Naive thymus-derived CD4-positive, alpha-beta T cell (primary cell): ENCODE measurements at regions of chr3 and their contacts with region 1.

Region 1: GRCh38 chr3:136075218-136075808 is 109.8 kb downstream of the PPP2R3A start:
- DNase-seq: peak; percentile 38 to 73 (median 65)
- ATAC-seq: peak; percentile 88
- H3K4me3 ChIP-seq: no peak overlapping the region
- H3K4me3 Mint-ChIP-seq: no peak overlapping the region
- H3K27ac ChIP-seq: no peak overlapping the region
- H3K27ac Mint-ChIP-seq: peak overlapping the region in 1 of 9 donors; percentile 28
- H3K4me1 ChIP-seq: no peaks in the 10 kb centered on the region
- H3K4me1 Mint-ChIP-seq: peaks cover 0 to 5% (median 4%) of the 10 kb centered on the region in 7 donors
- H3K27me3 ChIP-seq: no peaks in the 10 kb centered on the region
- H3K27me3 Mint-ChIP-seq: peaks cover 0 to 6% (median 0%) of the 10 kb centered on the region in 5 donors

Region 2: GRCh38 chr3:135246027-135246426 is 829.3 kb before region 1 on chr3:
- CTCF ChIA-PET with region 1: no interaction called
- POLR2A ChIA-PET with region 1: no interaction called
- intact Hi-C with region 1: no loop called
- DNase-seq: no peak
- ATAC-seq: no peak
- H3K4me3 ChIP-seq: no peak overlapping the region
- H3K4me3 Mint-ChIP-seq: no peak overlapping the region
- H3K27ac ChIP-seq: no peak overlapping the region
- H3K27ac Mint-ChIP-seq: no peak overlapping the region
- H3K4me1 ChIP-seq: no peaks in the 10 kb centered on the region
- H3K4me1 Mint-ChIP-seq: no peaks in the 10 kb centered on the region
- H3K27me3 ChIP-seq: no peaks in the 10 kb centered on the region
- H3K27me3 Mint-ChIP-seq: peaks cover 0 to 5% (median 0%) of the 10 kb centered on the region in 5 donors

Region 3: DNA sequence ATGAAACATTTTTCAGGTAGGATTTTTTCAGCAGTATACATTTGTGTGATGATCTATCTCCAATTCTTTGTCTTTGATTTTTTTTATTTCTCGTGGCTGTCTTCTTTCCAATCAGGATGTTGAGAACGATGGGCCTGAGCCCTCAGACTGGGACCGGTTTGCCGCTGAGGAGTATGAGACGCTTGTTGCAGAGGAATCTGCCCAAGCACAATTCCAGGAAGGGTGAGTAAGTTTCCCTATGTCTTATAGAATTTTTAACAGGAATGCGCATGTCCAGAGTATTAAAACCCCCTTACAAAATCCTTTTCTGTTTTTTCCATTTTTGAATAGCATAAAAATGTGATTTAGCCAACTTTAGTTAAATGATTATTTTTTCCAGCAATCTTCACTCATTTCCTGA is 30.8 kb after region 1 on chr3:
- CTCF ChIA-PET with region 1: no interaction called
- POLR2A ChIA-PET with region 1: no interaction called
- intact Hi-C with region 1: no loop called
- DNase-seq: no peak
- ATAC-seq: no peak
- H3K4me3 ChIP-seq: no peak overlapping the region
- H3K4me3 Mint-ChIP-seq: no peak overlapping the region
- H3K27ac ChIP-seq: no peak overlapping the region
- H3K27ac Mint-ChIP-seq: no peak overlapping the region
- H3K4me1 ChIP-seq: no peaks in the 10 kb centered on the region
- H3K4me1 Mint-ChIP-seq: peaks cover 0 to 18% (median 11%) of the 10 kb centered on the region in 7 donors
- H3K27me3 ChIP-seq: no peaks in the 10 kb centered on the region
- H3K27me3 Mint-ChIP-seq: peaks cover 0 to 14% (median 0%) of the 10 kb centered on the region in 5 donors

Region 4: DNA sequence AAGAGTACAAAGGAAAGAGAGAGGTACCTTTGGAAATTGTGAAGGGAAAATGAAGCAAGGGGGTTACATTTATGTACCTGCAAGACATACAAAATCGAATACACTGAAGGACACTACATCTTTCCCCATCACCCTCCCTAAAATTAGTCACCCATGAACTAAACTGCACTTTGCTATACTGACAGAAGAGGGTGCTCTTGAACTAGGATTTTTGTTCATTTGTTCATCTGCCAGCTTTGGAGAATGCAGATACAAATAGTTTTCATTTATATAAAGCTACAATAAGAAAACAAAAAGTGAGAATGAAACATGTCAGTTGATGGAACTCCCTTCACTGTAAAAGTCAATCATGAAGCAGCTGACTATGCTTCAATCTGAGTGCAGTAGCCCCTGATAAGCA is 230.6 kb after region 1 on chr3:
- CTCF ChIA-PET with region 1: no interaction called
- POLR2A ChIA-PET with region 1: no interaction called
- intact Hi-C with region 1: loop called in 1 of 2 experiments (anchors 10 kb)
- DNase-seq: peak in 1 of 9 donors; percentile 6
- ATAC-seq: no peak
- H3K4me3 ChIP-seq: no peak overlapping the region
- H3K4me3 Mint-ChIP-seq: no peak overlapping the region
- H3K27ac ChIP-seq: no peak overlapping the region
- H3K27ac Mint-ChIP-seq: no peak overlapping the region
- H3K4me1 ChIP-seq: no peaks in the 10 kb centered on the region
- H3K4me1 Mint-ChIP-seq: peaks cover 0 to 4% (median 0%) of the 10 kb centered on the region in 7 donors
- H3K27me3 ChIP-seq: no peaks in the 10 kb centered on the region
- H3K27me3 Mint-ChIP-seq: no peaks in the 10 kb centered on the region

Region 5: DNA sequence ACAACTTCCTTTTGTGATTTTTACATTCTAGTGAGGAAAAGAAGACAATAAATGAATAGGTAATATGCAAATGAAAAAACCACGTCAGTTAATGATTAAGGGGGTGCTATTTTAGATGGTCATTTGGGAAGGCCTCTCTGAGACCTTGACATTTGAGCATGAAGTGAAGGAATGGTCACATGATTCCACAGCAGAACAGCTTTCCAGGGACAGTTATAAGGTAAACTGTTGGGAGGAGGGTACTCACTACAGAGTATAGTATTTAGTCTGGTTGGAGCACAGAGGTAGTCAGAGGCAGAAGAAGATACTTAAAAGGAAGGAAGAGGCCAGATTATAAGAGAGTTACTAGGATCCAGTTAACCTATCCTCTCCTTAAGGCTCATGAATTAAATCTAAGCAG is 430.4 kb after region 1 on chr3:
- CTCF ChIA-PET with region 1: no interaction called
- POLR2A ChIA-PET with region 1: no interaction called
- intact Hi-C with region 1: loop called in 1 of 2 experiments (anchors 10 kb)
- DNase-seq: no peak
- ATAC-seq: no peak
- H3K4me3 ChIP-seq: no peak overlapping the region
- H3K4me3 Mint-ChIP-seq: no peak overlapping the region
- H3K27ac ChIP-seq: no peak overlapping the region
- H3K27ac Mint-ChIP-seq: peak overlapping the region in 3 of 9 donors; percentile 19 to 44 (median 34)
- H3K4me1 ChIP-seq: no peaks in the 10 kb centered on the region
- H3K4me1 Mint-ChIP-seq: peaks cover 0 to 16% (median 6%) of the 10 kb centered on the region in 7 donors
- H3K27me3 ChIP-seq: no peaks in the 10 kb centered on the region
- H3K27me3 Mint-ChIP-seq: no peaks in the 10 kb centered on the region

Region 6: GRCh38 chr3:136624894-136625815 is 549.8 kb after region 1 on chr3:
- CTCF ChIA-PET with region 1: no interaction called
- POLR2A ChIA-PET with region 1: no interaction called
- intact Hi-C with region 1: loop called in 1 of 2 experiments (anchors 10 kb)
- DNase-seq: no peak
- ATAC-seq: no peak
- H3K4me3 ChIP-seq: no peak overlapping the region
- H3K4me3 Mint-ChIP-seq: no peak overlapping the region
- H3K27ac ChIP-seq: no peak overlapping the region
- H3K27ac Mint-ChIP-seq: no peak overlapping the region
- H3K4me1 ChIP-seq: no peaks in the 10 kb centered on the region
- H3K4me1 Mint-ChIP-seq: peaks cover 2 to 41% (median 24%) of the 10 kb centered on the region in 7 donors
- H3K27me3 ChIP-seq: no peaks in the 10 kb centered on the region
- H3K27me3 Mint-ChIP-seq: no peaks in the 10 kb centered on the region

Region 7: GRCh38 chr3:137032465-137033120 is 957.3 kb after region 1 on chr3:
- CTCF ChIA-PET with region 1: interaction called, 4 read pairs
- POLR2A ChIA-PET with region 1: no interaction called
- intact Hi-C with region 1: loop called in 1 of 2 experiments (anchors 5 kb)
- DNase-seq: peak; percentile 19 to 79 (median 63)
- ATAC-seq: peak; percentile 87
- H3K4me3 ChIP-seq: peak overlapping the region; percentile 55
- H3K4me3 Mint-ChIP-seq: peak overlapping the region; percentile 48 to 80 (median 74)
- H3K27ac ChIP-seq: no peak overlapping the region
- H3K27ac Mint-ChIP-seq: peak overlapping the region in 1 of 9 donors; percentile 17
- H3K4me1 ChIP-seq: no peaks in the 10 kb centered on the region
- H3K4me1 Mint-ChIP-seq: peaks cover 7 to 9% (median 8%) of the 10 kb centered on the region in 7 donors
- H3K27me3 ChIP-seq: peaks cover 0 to 7% of the 10 kb centered on the region in 2 donors
- H3K27me3 Mint-ChIP-seq: peaks cover 14 to 39% (median 33%) of the 10 kb centered on the region in 5 donors

Region 8: GRCh38 chr3:137970914-137971831 is 1895.9 kb after region 1 on chr3:
- CTCF ChIA-PET with region 1: no interaction called
- POLR2A ChIA-PET with region 1: no interaction called
- intact Hi-C with region 1: loop called (anchors 2 to 10 kb)
- DNase-seq: peak in 8 of 9 donors; percentile 6 to 61 (median 23)
- ATAC-seq: peak; percentile 47
- H3K4me3 ChIP-seq: no peak overlapping the region
- H3K4me3 Mint-ChIP-seq: no peak overlapping the region
- H3K27ac ChIP-seq: no peak overlapping the region
- H3K27ac Mint-ChIP-seq: no peak overlapping the region
- H3K4me1 ChIP-seq: no peaks in the 10 kb centered on the region
- H3K4me1 Mint-ChIP-seq: peaks cover 0 to 5% (median 3%) of the 10 kb centered on the region in 7 donors
- H3K27me3 ChIP-seq: no peaks in the 10 kb centered on the region
- H3K27me3 Mint-ChIP-seq: peaks cover 3 to 21% (median 9%) of the 10 kb centered on the region in 5 donors